ENCODE measurements at regions of chr13 and their contacts with region 1.

Region 1: GRCh38 chr13:65677906-65678305 is 1552.2 kb downstream of the PCDH9 start:
- DNase-seq: no peak
- ATAC-seq: no peak
- H3K4me3 ChIP-seq: no peak overlapping the region
- H3K27ac ChIP-seq: no peak overlapping the region
- H3K4me1 ChIP-seq: no peaks in the 10 kb centered on the region
- H3K27me3 ChIP-seq: no peaks in the 10 kb centered on the region
- CTCF ChIP-seq: no peak
- EP300 ChIP-seq: no peak
- POLR2A ChIP-seq: no peak
- RAD21 ChIP-seq: no peak

Region 2: GRCh38 chr13:65268009-65268408 is 409.9 kb before region 1 on chr13:
- CTCF ChIA-PET with region 1: no interaction called
- POLR2A ChIA-PET with region 1: no interaction called
- in situ Hi-C with region 1: no loop called
- intact Hi-C with region 1: loop called (anchors 5 kb)
- DNase-seq: no peak
- ATAC-seq: no peak
- H3K4me3 ChIP-seq: no peak overlapping the region
- H3K27ac ChIP-seq: no peak overlapping the region
- H3K4me1 ChIP-seq: no peaks in the 10 kb centered on the region
- H3K27me3 ChIP-seq: no peaks in the 10 kb centered on the region
- CTCF ChIP-seq: no peak
- EP300 ChIP-seq: no peak
- POLR2A ChIP-seq: no peak
- RAD21 ChIP-seq: no peak